Mammary epithelial cell (primary cell): ENCODE measurements at regions of chr1 and their contacts with region 1.

Region 1: DNA sequence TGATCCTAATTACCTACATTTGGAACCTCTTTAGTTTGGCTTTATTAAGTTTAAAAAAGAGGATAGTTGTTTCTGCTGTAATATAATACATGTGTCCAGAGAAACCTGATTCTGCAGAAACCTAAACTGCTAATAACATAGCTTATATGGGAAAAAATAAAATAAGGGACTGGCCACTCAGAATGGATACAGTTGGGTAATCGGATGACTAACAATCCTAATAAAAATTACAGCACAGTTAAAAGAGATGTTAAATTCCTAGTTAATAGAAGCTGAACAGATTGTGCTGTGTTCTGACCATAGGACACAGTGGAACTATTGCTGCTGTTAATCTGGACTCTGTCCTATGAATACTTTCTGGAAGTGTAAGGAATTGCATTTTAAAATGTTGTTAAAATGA is 16.0 kb downstream of the ARV1 start:
- DNase-seq: no peak
- H3K4me3 ChIP-seq: no peak overlapping the region
- H3K27ac ChIP-seq: no peak overlapping the region
- H3K4me1 ChIP-seq: no peaks in the 10 kb centered on the region
- H3K27me3 ChIP-seq: no peaks in the 10 kb centered on the region
- CTCF ChIP-seq: no peak

Region 2: DNA sequence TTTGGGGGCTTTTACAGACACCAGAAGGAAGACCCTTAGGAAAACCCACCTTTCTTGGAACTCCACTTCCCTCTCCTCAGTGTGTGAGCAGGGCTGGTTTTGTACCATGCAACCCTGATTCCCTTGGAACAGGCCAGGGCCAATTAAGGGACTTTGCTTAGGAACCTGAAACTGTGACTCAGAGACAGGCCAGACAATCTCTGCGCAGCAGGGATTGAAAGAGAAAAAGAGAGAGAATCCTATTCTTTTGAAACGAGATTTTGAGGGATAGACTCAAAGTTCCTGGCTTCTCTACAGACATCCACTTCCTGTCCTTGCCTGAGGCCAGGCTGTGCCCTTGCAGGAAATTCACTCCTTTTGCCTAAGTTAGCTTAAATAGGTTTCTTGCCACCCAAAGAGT is 103.4 kb before region 1 on chr1:
- CTCF ChIA-PET with region 1: no interaction called
- dilution Hi-C with region 1: no loop called
- in situ Hi-C with region 1: no loop called
- intact Hi-C with region 1: no loop called
- DNase-seq: peak; percentile 57
- H3K4me3 ChIP-seq: no peak overlapping the region
- H3K27ac ChIP-seq: no peak overlapping the region
- H3K4me1 ChIP-seq: no peaks in the 10 kb centered on the region
- H3K27me3 ChIP-seq: no peaks in the 10 kb centered on the region
- CTCF ChIP-seq: no peak

Region 3: GRCh38 chr1:231070758-231071444 is 76.0 kb after region 1 on chr1:
- CTCF ChIA-PET with region 1: no interaction called
- dilution Hi-C with region 1: loop called (anchors 5 kb)
- in situ Hi-C with region 1: no loop called
- intact Hi-C with region 1: no loop called
- DNase-seq: no peak
- H3K4me3 ChIP-seq: no peak overlapping the region
- H3K27ac ChIP-seq: no peak overlapping the region
- H3K4me1 ChIP-seq: no peaks in the 10 kb centered on the region
- H3K27me3 ChIP-seq: no peaks in the 10 kb centered on the region
- CTCF ChIP-seq: no peak